ENCODE measurements at regions of chr3 and their contacts with region 1.

Region 1: DNA sequence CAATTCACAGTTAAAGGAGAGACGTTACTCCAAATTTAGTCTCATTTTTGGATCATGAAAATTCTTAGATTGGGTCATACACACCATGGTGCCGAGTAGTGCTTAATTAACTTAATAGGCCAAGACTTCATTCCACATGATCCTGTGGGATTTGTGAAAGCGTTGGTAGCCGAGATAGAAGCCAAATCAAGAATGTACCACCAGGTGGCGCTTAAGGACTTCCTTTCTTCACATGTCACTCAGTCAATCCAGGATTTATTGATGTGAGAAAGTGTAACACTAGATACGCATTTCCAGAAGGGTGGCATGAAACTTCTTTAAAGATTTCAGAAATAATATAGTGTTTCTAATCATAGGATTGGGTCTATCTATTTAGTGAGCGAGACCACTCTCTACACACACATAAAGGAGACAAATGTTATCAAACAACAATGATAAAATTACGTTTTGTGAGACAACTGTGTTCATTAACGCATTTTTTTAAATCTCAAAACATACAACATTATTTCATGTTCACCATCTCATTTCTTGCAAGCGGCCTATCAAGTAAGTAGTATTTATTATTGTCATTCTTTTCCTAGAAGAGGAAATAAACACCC is 436.1 kb downstream of the CHL1 start:
- DNase-seq: peak; percentile 74
- H3K4me3 ChIP-seq: no peak overlapping the region
- H3K27ac ChIP-seq: no peak overlapping the region
- H3K4me1 ChIP-seq: no peaks in the 10 kb centered on the region
- H3K27me3 ChIP-seq: no peaks in the 10 kb centered on the region
- CTCF ChIP-seq: peak; percentile 80

Region 2: GRCh38 chr3:264394-265156 is 368.1 kb before region 1 on chr3:
- CTCF ChIA-PET with region 1: no interaction called
- POLR2A ChIA-PET with region 1: no interaction called
- intact Hi-C with region 1: no loop called
- DNase-seq: no peak
- H3K4me3 ChIP-seq: no peak overlapping the region
- H3K27ac ChIP-seq: no peak overlapping the region
- H3K4me1 ChIP-seq: no peaks in the 10 kb centered on the region
- H3K27me3 ChIP-seq: no peaks in the 10 kb centered on the region
- CTCF ChIP-seq: no peak

Region 3: GRCh38 chr3:414063-414462 is 218.6 kb before region 1 on chr3:
- CTCF ChIA-PET with region 1: no interaction called
- POLR2A ChIA-PET with region 1: no interaction called
- intact Hi-C with region 1: loop called (anchors 10 kb)
- DNase-seq: peak; percentile 42
- H3K4me3 ChIP-seq: no peak overlapping the region
- H3K27ac ChIP-seq: no peak overlapping the region
- H3K4me1 ChIP-seq: no peaks in the 10 kb centered on the region
- H3K27me3 ChIP-seq: no peaks in the 10 kb centered on the region
- CTCF ChIP-seq: peak; percentile 52; the same call in 1 of the 2 replicates

Region 4: DNA sequence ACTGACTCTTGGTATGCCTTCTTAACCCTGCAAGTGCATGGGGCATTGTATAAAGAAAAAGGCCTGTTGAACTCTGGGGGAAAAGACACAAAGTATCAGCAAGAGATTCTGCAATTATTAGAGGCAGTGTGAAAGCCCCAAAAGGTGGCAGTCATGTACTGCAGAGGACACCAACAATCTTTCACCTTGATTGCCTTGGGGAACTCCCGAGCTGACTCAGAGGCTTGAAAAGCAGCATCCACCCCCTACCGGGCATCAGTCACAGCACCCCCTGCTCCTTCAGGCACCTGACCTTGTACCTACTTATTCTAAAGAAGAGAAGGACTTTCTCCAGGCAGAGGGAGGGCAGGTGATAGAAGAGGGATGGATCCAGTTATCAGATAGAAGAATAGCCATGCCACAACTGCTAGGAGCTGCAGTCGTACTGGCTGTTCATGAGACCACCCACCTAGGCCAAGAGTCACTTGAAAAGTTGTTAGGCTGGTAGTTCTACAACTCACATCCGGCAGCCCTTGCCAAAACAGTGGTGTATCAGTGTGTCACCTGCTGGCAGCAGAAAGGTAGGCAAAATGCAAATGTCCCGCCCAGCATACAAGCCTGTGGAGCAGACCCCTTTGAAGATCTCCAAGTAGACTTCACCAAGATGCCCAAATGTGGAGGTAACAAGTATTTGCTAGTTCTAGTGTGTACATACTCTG is 218.6 kb after region 1 on chr3:
- CTCF ChIA-PET with region 1: no interaction called
- POLR2A ChIA-PET with region 1: no interaction called
- intact Hi-C with region 1: loop called (anchors 10 kb)
- DNase-seq: peak; percentile 3
- H3K4me3 ChIP-seq: no peak overlapping the region
- H3K27ac ChIP-seq: no peak overlapping the region
- H3K4me1 ChIP-seq: no peaks in the 10 kb centered on the region
- H3K27me3 ChIP-seq: no peaks in the 10 kb centered on the region
- CTCF ChIP-seq: no peak

Region 5: GRCh38 chr3:877001-877400 is 244.3 kb after region 1 on chr3:
- CTCF ChIA-PET with region 1: no interaction called
- POLR2A ChIA-PET with region 1: no interaction called
- intact Hi-C with region 1: no loop called
- DNase-seq: no peak
- H3K4me3 ChIP-seq: no peak overlapping the region
- H3K27ac ChIP-seq: no peak overlapping the region
- H3K4me1 ChIP-seq: no peaks in the 10 kb centered on the region
- H3K27me3 ChIP-seq: no peaks in the 10 kb centered on the region
- CTCF ChIP-seq: no peak

Region 6: DNA sequence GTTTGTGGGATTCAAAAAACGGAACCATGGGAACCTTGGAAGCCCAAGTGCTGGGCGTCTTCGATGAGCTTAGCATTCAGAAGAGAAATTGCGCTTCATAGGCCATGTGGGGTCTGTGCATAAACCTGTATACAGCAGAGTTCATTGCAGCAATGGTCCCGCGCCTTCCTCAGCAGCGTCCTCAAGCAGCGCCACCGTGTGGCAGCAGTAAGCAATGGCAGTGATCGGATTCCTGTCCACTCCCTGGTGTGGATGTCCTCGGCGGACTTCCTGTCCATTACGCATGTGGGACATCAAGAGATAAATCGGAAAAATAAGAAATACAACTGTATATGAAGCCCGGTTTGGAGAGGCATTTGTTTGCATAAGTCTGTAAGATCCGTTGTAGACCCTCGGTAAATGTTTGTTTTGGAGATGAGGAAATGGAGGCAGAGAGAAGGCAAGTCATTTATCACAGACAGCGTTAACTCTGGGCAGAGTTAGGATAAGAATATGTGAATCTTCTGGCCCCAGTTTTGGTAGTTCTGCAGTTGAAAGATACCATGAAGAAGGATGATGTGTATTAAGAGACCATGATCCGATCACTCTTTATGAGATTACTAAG is 1523.7 kb after region 1 on chr3:
- CTCF ChIA-PET with region 1: no interaction called
- POLR2A ChIA-PET with region 1: no interaction called
- intact Hi-C with region 1: loop called (anchors 10 kb)
- DNase-seq: peak; percentile 77
- H3K4me3 ChIP-seq: peak overlapping the region; percentile 34
- H3K27ac ChIP-seq: no peak overlapping the region
- H3K4me1 ChIP-seq: peaks cover 5% of the 10 kb centered on the region
- H3K27me3 ChIP-seq: no peaks in the 10 kb centered on the region
- CTCF ChIP-seq: peak; percentile 93